ENCODE measurements at regions of chr6 and their contacts with region 1.

Region 1: GRCh38 chr6:5606546-5606945 is 345.2 kb downstream of the FARS2 start:
- DNase-seq: no peak
- H3K4me3 ChIP-seq: no peak overlapping the region
- H3K27me3 ChIP-seq: no peaks in the 10 kb centered on the region
- CTCF ChIP-seq: no peak

Region 2: GRCh38 chr6:5619249-5619648 is 12.7 kb after region 1 on chr6:
- CTCF ChIA-PET with region 1: interaction called, 8 read pairs
- POLR2A ChIA-PET with region 1: interaction called, 14 read pairs
- DNase-seq: no peak
- H3K4me3 ChIP-seq: no peak overlapping the region
- H3K27me3 ChIP-seq: no peaks in the 10 kb centered on the region
- CTCF ChIP-seq: no peak